CD8-positive, alpha-beta memory T cell (primary cell): ENCODE measurements at regions of chr11 and their contacts with region 1.

Region 1: DNA sequence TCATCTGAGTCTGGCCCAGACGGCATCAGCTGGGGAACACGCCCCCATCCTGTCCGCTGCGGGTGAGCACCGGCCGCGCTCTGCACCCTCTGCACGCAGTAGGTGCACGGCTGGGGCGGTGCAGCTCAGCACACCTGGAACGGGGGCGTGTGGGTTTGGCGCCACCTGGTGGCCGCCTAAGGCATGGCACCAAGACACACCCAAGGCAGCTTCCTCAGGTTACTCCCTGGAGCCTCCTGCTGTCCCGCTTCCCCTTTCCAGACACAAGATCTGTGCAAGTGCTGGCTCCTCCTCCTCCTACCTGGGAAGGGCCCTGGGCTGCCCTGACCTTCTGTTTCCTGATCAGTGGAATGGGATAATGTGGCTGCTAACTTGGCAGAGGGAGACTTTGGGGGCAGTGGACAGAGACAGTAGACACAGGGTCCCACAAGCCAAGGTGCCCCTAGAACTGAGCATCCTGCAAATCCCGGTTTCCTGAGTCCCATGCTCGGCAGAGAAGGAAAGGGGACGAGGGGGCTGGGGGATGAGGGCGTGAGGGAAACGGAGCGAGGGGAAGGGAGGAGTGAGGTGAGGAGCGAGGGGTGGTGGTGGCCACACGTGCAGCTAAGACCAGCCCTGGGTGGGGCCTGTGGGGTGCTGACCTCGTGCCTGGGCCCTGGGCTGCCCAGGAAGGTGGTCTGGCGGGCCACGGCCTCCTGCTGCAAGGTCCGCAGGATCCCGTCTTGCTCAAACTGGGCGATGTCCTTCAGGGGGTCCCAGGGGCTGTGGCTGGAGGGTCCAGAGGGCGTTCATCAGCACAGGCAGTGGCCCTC is 34.8 kb upstream of the CARS1 start:
- DNase-seq: peak; percentile 58 to 81 (median 65)
- H3K4me3 ChIP-seq: no peak overlapping the region
- H3K4me3 Mint-ChIP-seq: peak overlapping the region in 1 of 7 donors; percentile 34
- H3K27ac ChIP-seq: no peak overlapping the region
- H3K27ac Mint-ChIP-seq: peak overlapping the region in 1 of 8 donors; percentile 38
- H3K4me1 ChIP-seq: no peaks in the 10 kb centered on the region
- H3K4me1 Mint-ChIP-seq: peaks cover 0 to 3% (median 2%) of the 10 kb centered on the region in 3 donors
- H3K27me3 ChIP-seq: no peaks in the 10 kb centered on the region
- H3K27me3 Mint-ChIP-seq: peaks cover 3 to 6% of the 10 kb centered on the region in 2 donors

Region 2: DNA sequence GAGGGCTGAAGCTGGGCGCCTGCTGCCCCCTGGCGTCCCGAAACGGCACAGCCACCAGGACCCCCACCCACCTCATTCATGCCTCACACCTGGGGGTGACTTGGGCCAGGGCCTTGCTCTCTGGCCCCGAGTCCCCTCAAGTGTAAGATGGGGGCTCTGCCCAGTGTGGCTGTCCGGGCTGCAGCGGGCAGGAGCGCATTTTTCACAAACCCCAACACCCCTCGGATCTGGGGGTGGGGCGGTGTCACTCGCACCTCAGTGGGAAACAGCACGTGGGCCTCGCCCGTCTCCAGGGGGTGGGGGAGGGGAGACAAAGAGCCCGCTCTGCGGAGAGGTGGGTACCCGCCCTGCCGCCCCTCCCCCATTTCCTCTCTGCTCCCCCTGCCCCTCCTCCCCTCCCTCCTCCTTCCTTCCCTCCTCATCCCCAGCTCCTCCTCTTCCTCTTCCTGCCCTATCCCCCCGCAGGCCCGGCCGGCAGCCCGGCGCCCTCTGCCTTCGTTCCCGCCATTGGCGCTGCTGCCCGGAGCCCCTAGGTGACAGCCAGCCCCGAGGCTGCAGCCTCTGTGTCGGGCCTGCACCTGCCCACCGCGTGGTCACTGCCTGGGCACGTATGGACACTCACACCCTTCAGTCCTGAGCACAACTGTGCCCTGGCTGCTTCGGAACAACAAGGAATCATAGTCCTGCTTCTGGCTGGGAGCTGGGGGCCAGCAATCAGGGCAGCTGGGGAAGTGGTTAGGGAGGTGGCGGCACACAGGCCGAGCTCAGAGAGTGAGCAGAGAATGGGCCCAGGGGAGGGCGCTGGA is 199.6 kb before region 1 on chr11:
- CTCF ChIA-PET with region 1: interaction called, 30 read pairs
- POLR2A ChIA-PET with region 1: no interaction called
- DNase-seq: peak; percentile 38 to 73 (median 46)
- H3K4me3 ChIP-seq: peak overlapping the region; percentile 63
- H3K4me3 Mint-ChIP-seq: peak overlapping the region; percentile 62 to 91 (median 75)
- H3K27ac ChIP-seq: peak overlapping the region; percentile 71
- H3K27ac Mint-ChIP-seq: peak overlapping the region; percentile 55 to 91 (median 82)
- H3K4me1 ChIP-seq: peaks cover 31% of the 10 kb centered on the region
- H3K4me1 Mint-ChIP-seq: peaks cover 20 to 34% (median 24%) of the 10 kb centered on the region in 3 donors
- H3K27me3 ChIP-seq: no peaks in the 10 kb centered on the region
- H3K27me3 Mint-ChIP-seq: no peaks in the 10 kb centered on the region

Region 3: GRCh38 chr11:2995031-2995561 is 96.9 kb before region 1 on chr11:
- CTCF ChIA-PET with region 1: no interaction called
- POLR2A ChIA-PET with region 1: no interaction called
- DNase-seq: no peak
- H3K4me3 ChIP-seq: no peak overlapping the region
- H3K4me3 Mint-ChIP-seq: peak overlapping the region in 1 of 7 donors; percentile 71
- H3K27ac ChIP-seq: no peak overlapping the region
- H3K27ac Mint-ChIP-seq: peak overlapping the region in 1 of 8 donors; percentile 11
- H3K4me1 ChIP-seq: peaks cover 7% of the 10 kb centered on the region
- H3K4me1 Mint-ChIP-seq: peaks cover 6 to 10% (median 9%) of the 10 kb centered on the region in 3 donors
- H3K27me3 ChIP-seq: no peaks in the 10 kb centered on the region
- H3K27me3 Mint-ChIP-seq: peaks cover 0 to 3% of the 10 kb centered on the region in 2 donors

Region 4: GRCh38 chr11:3014057-3014938 is 77.7 kb before region 1 on chr11:
- CTCF ChIA-PET with region 1: interaction called, 16 read pairs
- POLR2A ChIA-PET with region 1: no interaction called
- DNase-seq: peak; percentile 53 to 95 (median 88)
- H3K4me3 ChIP-seq: peak overlapping the region; percentile 58
- H3K4me3 Mint-ChIP-seq: peak overlapping the region; percentile 6 to 76 (median 71)
- H3K27ac ChIP-seq: no peak overlapping the region
- H3K27ac Mint-ChIP-seq: peak overlapping the region; percentile 74 to 91 (median 88)
- H3K4me1 ChIP-seq: peaks cover 45% of the 10 kb centered on the region
- H3K4me1 Mint-ChIP-seq: peaks cover 28 to 81% (median 57%) of the 10 kb centered on the region in 3 donors
- H3K27me3 ChIP-seq: no peaks in the 10 kb centered on the region
- H3K27me3 Mint-ChIP-seq: no peaks in the 10 kb centered on the region

Region 5: DNA sequence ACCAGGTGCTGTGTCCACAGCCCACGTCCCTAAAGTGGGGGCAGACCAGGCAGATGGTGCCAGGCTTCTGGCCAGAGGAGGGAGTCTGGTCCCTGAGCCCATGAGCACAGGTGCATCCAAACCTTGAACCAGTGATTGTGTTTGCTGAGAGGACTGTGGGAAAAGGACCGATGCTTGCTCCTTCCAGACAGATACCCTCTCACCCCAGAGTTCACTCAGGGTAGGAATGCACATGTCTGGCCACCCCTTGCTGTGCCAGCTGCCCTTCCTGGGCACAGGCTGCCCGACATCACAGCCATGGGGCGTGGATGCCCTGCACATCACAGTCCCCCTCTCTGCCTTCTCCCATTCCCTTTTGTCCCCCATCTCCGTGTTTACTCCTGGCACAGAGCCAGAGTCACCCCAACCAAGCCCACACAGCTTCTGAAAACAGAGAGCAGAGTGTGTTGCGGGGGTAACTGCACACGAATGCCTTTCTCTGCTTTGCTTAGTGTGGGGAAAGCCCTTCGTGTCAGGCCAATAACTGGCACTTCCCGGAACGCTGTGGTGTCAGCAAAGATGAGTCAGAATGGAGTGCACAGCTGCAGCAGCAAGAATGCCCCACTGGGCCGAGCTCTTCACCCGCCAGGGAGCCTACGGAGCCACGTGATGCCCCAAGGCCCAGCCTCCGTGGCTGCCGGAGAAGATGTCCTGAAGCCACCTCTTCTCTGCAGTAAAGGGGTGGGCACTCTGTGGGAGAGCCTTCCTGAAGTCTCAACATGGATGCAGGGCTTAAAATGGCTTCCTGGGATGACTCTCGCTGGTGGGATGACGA is 42.4 kb before region 1 on chr11:
- CTCF ChIA-PET with region 1: interaction called, 31 read pairs
- POLR2A ChIA-PET with region 1: interaction called, 6 read pairs
- DNase-seq: peak in 4 of 5 donors; percentile 73 to 89 (median 75)
- H3K4me3 ChIP-seq: no peak overlapping the region
- H3K4me3 Mint-ChIP-seq: peak overlapping the region; percentile 4 to 86 (median 67)
- H3K27ac ChIP-seq: peak overlapping the region; percentile 74
- H3K27ac Mint-ChIP-seq: peak overlapping the region; percentile 76 to 99 (median 96)
- H3K4me1 ChIP-seq: peaks cover 19% of the 10 kb centered on the region
- H3K4me1 Mint-ChIP-seq: peaks cover 27 to 59% (median 39%) of the 10 kb centered on the region in 3 donors
- H3K27me3 ChIP-seq: no peaks in the 10 kb centered on the region
- H3K27me3 Mint-ChIP-seq: no peaks in the 10 kb centered on the region